Esophagus muscularis mucosa (tissue), 4 donors: ENCODE measurements at regions of chr5 and their contacts with region 1.

Region 1: DNA sequence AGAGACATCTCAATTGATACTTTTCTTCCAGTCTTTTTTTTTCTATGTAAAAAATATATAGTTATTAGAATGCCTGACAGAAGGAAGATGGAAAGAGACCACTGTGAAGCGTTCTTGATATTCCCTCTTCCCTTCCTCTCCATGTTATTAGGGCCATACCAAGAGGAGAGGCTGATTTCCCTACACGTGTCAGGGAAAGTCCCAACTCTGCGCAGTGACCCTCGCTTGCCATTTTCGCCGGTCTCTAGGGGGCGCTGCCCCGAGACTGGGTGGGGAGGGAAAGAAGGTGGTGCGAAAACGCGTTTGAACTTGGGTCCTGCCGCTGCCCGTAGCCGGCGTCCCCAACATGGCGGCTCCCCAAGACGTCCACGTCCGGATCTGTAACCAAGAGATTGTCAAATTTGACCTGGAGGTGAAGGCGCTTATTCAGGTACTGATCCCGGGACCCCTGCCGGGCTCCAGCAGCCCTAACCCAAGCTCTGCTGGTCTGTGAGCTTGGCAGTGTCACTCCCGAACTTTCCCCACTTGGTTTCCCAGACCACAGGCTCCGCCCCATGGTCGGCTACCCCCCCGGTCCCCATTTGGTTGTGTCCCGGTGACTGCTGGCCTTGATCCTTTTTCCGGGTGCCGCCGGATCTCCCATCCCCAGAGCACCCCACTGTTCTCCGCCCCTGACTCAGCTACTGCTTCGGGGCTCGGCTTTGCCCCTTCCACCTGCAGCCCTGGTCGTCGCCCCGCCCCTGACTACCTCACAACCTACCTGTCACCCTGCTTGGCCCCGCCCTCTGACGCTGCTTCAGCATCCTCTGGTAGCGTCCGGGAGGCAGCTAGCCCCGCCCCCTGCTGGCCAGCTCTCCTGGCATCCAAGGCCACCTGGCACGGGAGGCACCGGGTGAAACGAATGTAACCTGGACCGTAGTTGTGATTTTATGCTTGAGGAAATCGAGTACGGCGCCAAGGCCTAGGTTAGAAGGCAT is at the start of gene BNIP1:
- DNase-seq: peak; percentile 98
- H3K4me3 ChIP-seq: peak within 1 kb of the TSS; percentile 74 to 85 (median 81)
- H3K27ac ChIP-seq: peak within 1 kb of the TSS; percentile 84 to 87 (median 86)
- H3K4me1 ChIP-seq: peaks cover 4 to 11% (median 10%) of the 10 kb centered on the region in 4 donors
- H3K27me3 ChIP-seq: no peaks in the 10 kb centered on the region
- CTCF ChIP-seq: peak; percentile 89 to 96 (median 95)
- EP300 ChIP-seq: no peak
- POLR2A ChIP-seq: no peak
- total RNA-seq, gene BNIP1: 5.4 to 9.4 (median 8.3) TPM

Region 2: DNA sequence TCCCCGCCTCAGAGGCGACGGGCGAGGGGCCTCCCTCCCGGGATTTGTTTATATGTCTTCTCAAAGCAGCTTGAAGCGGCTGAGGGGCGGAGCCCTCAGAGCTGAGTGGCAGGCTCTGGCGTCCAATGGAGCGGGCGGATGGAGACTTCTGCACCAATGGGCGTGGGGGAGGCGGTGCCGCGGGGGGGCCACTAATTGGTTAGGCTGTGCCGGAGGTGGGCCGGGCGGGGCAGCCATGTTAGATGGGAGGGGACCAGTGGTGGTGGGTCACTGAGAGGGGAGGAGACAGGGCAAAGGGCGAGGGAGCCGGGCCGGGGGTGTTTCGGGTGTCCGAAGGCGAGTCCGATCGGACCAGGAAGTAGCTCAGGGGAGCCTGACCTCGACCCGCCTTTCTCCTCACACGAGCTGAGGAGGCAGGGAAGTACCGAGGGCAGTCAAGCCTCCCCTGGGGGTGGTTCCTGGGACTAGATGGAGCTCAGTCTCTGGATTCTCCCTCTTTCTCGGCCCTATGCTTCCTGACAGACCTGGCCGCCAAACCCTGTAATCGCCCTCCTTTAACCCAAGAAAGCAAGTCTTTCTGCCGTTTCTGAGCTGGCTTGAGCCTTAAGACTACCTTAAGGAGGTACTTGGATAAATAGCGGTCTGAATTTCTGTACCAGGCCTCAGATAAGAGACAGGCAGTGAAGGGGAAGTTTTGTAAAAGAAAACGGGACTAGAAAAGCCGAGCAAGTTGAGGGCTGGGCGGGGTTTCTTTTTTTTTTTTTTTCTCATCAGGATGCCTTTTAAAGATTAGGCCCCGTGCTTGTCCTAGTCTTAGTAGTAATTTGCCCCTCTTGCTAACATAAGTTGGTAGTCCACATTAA is 87.2 kb before region 1 on chr5:
- intact Hi-C with region 1: loop called (anchors 10 kb)
- DNase-seq: peak; percentile 100
- H3K4me3 ChIP-seq: peak overlapping the region; percentile 88 to 100 (median 96)
- H3K27ac ChIP-seq: peak overlapping the region; percentile 96 to 100 (median 98)
- H3K4me1 ChIP-seq: peaks cover 26 to 56% (median 50%) of the 10 kb centered on the region in 4 donors
- H3K27me3 ChIP-seq: peaks cover 0 to 4% (median 0%) of the 10 kb centered on the region in 4 donors
- CTCF ChIP-seq: peak; percentile 12 to 33 (median 25)
- EP300 ChIP-seq: no peak
- POLR2A ChIP-seq: peak; percentile 51